AG04450 (cell line): ENCODE measurements at regions of chr6 and their contacts with region 1.

Region 1: GRCh38 chr6:2952557-2953095 is 18.7 kb downstream of the SERPINB6 start:
- DNase-seq: peak; percentile 75
- H3K4me3 ChIP-seq: 0 out of 2 replicates have a peak overlapping the region, but pooled peaks have one; percentile 11
- H3K27ac ChIP-seq: peak overlapping the region; percentile 65
- H3K27me3 ChIP-seq: no peaks in the 10 kb centered on the region
- CTCF ChIP-seq: peak; percentile 99

Region 2: DNA sequence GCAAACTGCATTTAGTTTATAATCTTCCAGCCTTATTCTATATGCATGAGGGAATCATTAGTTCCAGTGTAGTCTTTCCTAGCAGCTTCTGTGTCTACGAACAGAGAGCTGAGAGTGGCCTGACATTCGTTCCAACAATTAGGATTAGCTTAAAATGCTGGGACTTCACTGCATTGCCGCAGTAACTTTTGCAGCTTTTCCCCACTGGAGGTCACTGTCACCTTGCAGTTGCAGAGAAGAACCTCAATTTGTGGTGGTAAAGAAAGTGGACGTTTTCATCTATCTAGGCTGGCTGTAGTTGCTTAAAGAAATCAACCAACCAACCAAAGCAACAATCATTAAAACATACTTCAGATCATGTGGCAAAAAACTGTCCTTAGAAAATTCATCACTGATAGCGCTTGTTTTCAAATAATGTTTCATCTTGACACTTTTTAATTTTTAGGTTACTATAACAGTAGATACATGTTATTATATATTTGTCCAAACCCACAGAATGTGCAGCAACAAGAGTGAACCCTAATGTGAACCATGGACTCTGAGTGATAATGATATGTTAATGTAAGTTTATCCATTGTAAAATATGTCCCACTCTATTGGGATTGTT is 214.2 kb before region 1 on chr6:
- CTCF ChIA-PET with region 1: interaction called, 13 read pairs
- POLR2A ChIA-PET with region 1: no interaction called
- DNase-seq: peak; percentile 45
- H3K4me3 ChIP-seq: no peak overlapping the region
- H3K27ac ChIP-seq: no peak overlapping the region
- H3K27me3 ChIP-seq: no peaks in the 10 kb centered on the region
- CTCF ChIP-seq: peak; percentile 83

Region 3: DNA sequence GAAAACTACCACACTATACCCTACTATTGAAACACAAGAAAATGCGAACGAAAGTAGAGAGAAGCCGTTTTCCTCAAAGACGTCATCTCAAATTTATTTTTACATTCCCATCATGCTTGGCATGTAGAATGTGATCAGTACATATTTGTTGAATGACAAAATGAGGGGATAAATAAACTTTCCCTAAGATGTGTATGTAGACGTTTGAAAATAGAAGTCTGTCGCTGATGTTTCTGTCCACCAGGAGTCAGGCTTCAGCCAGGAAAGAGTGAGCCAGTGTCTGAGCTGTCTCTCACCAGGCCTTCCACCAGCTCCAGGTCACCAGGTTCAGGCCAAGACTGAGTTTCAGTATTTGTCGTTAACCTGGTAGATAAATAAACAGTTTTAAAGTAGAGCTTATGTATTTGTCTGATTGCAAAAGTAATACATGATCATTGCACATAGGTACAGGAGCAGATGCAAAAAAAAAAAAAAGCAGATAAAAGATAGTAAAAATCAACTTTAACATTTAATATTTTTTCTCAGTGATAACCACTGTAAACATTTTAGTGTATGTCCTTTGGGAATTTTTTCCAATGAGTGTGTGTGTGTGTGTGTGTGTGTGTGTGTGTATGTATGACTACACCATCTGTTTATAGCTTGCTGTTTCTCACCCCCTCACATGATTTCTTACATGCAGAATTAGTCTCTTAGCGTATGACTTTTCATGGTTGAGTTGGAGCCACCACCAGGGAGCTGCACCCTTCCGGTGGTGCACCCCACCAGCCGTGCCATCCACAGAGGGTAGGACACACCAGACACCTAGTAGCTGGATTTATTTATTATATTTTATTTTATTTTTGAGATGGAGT is 161.3 kb before region 1 on chr6:
- CTCF ChIA-PET with region 1: interaction called, 18 read pairs
- POLR2A ChIA-PET with region 1: no interaction called
- DNase-seq: peak; percentile 84
- H3K4me3 ChIP-seq: peak overlapping the region; percentile 21
- H3K27ac ChIP-seq: peak overlapping the region; percentile 98
- H3K27me3 ChIP-seq: no peaks in the 10 kb centered on the region
- CTCF ChIP-seq: peak; percentile 88

Region 4: GRCh38 chr6:2862712-2863181 is 89.9 kb before region 1 on chr6:
- CTCF ChIA-PET with region 1: interaction called, 17 read pairs
- POLR2A ChIA-PET with region 1: no interaction called
- DNase-seq: no peak
- H3K4me3 ChIP-seq: no peak overlapping the region
- H3K27ac ChIP-seq: no peak overlapping the region
- H3K27me3 ChIP-seq: no peaks in the 10 kb centered on the region
- CTCF ChIP-seq: no peak

Region 5: GRCh38 chr6:2921520-2922115 is 31.0 kb before region 1 on chr6:
- CTCF ChIA-PET with region 1: interaction called, 24 read pairs
- POLR2A ChIA-PET with region 1: interaction called, 4 read pairs
- DNase-seq: no peak
- H3K4me3 ChIP-seq: no peak overlapping the region
- H3K27ac ChIP-seq: no peak overlapping the region
- H3K27me3 ChIP-seq: peaks cover 12% of the 10 kb centered on the region
- CTCF ChIP-seq: no peak

Region 6: DNA sequence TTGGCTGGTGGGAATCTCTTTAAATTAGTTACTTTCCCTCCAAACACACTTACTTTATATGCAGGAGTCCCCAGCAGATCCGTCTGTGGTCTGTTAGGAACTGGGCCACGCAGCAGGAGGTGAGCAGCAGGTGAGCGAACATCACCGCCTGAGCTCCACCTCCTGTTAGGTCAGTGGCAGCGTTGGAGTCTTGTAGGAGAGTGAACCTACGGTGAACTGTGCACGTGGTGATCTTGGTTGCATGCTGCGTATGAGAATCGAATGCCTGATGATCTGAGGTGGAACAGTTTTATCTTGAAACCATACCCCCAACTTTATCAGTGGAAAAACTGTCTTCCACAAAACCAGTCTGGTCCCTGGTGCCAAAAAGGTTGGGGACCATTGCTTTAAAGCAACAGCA is 13.7 kb after region 1 on chr6:
- CTCF ChIA-PET with region 1: interaction called, 46 read pairs
- POLR2A ChIA-PET with region 1: interaction called, 8 read pairs
- DNase-seq: no peak
- H3K4me3 ChIP-seq: no peak overlapping the region
- H3K27ac ChIP-seq: no peak overlapping the region
- H3K27me3 ChIP-seq: no peaks in the 10 kb centered on the region
- CTCF ChIP-seq: no peak

Region 7: DNA sequence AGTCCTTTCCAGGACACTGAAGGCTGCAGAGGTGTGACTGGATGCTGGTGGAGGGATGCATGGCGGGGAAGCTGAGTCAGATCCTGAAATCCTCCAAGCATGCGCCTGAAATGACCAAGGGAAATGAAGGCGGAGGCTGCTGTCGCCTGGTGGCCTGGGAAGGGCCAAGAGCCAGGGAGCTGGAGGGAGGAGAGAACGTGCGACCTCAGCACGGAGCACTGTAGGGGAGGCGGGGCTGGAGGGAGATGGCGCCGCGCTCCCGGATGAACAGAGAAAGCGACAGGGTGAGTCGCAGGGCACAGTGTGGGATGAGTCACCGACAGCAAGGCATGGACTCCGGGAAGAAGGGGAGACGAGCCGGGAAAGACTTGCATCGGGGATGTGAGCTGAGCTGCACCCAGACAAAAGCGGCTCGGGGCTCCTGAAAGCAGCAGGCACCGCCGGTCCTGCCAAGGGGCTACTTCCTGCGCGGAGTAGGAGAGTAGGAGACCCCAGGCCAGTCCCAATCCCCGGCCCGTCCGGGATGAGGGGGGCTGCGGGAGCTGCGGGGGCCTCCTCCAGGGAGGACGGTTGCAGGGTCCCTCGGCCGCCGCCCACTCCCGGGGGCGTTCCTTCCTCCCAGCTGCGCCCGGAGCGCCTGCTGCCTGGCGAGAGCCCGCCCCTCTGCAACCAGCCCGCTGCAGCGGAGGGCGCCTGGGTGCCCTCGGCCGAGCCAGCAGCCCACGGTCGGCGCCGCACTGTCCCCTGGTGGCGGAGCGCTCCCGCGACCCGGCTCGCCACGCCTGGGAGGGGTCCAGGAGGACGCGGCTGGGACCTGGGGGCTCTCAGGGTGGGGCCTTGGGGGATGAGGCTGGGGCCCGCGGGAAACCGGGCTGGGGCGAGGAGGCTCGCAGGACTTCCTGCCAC is 36.1 kb after region 1 on chr6:
- CTCF ChIA-PET with region 1: interaction called, 165 read pairs
- POLR2A ChIA-PET with region 1: interaction called, 27 read pairs
- DNase-seq: peak; percentile 54
- H3K4me3 ChIP-seq: peak overlapping the region; percentile 82
- H3K27ac ChIP-seq: peak overlapping the region; percentile 96
- H3K27me3 ChIP-seq: no peaks in the 10 kb centered on the region
- CTCF ChIP-seq: peak; percentile 63